CD4-positive, alpha-beta memory T cell (primary cell): ENCODE measurements at regions of chr12 and their contacts with region 1.

Region 1: GRCh38 chr12:131642101-131642540 is 68.8 kb upstream of the SFSWAP start:
- DNase-seq: no peak
- H3K4me3 ChIP-seq: no peak overlapping the region
- H3K4me3 Mint-ChIP-seq: no peak overlapping the region
- H3K27ac ChIP-seq: no peak overlapping the region
- H3K27ac Mint-ChIP-seq: no peak overlapping the region
- H3K4me1 ChIP-seq: no peaks in the 10 kb centered on the region
- H3K4me1 Mint-ChIP-seq: peaks cover 0 to 4% (median 1%) of the 10 kb centered on the region in 4 donors
- H3K27me3 ChIP-seq: no peaks in the 10 kb centered on the region
- H3K27me3 Mint-ChIP-seq: peaks cover 0 to 5% of the 10 kb centered on the region in 2 donors

Region 2: DNA sequence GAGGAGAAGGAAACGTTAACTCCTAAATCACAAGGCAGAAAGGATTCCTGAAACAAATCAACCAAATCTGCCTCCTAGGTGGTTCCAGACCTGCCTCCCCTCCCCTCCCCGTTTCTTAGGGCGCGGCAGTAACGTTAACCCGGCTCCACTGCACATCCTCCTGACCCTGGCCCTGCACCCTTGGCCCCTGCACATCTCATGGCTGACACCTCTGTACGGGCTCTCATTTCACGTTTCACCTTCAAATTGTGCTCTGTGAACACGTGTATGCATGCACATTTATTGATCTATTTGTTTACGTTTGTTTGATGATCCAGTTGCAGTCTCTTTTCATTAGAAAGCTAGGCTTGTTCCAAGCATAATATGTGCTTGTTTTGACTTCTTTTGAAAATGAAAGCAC is 330.4 kb before region 1 on chr12:
- CTCF ChIA-PET with region 1: no interaction called
- POLR2A ChIA-PET with region 1: no interaction called
- intact Hi-C with region 1: loop called (anchors 5 kb)
- DNase-seq: no peak
- H3K4me3 ChIP-seq: no peak overlapping the region
- H3K4me3 Mint-ChIP-seq: peak overlapping the region in 2 of 8 donors; percentile 55 to 63
- H3K27ac ChIP-seq: no peak overlapping the region
- H3K27ac Mint-ChIP-seq: no peak overlapping the region
- H3K4me1 ChIP-seq: no peaks in the 10 kb centered on the region
- H3K4me1 Mint-ChIP-seq: peaks cover 0 to 17% (median 6%) of the 10 kb centered on the region in 4 donors
- H3K27me3 ChIP-seq: no peaks in the 10 kb centered on the region
- H3K27me3 Mint-ChIP-seq: peaks cover 9 to 19% of the 10 kb centered on the region in 2 donors

Region 3: GRCh38 chr12:131671276-131671675 is 29.2 kb after region 1 on chr12:
- CTCF ChIA-PET with region 1: no interaction called
- POLR2A ChIA-PET with region 1: no interaction called
- intact Hi-C with region 1: no loop called
- DNase-seq: no peak
- H3K4me3 ChIP-seq: no peak overlapping the region
- H3K4me3 Mint-ChIP-seq: no peak overlapping the region
- H3K27ac ChIP-seq: no peak overlapping the region
- H3K27ac Mint-ChIP-seq: no peak overlapping the region
- H3K4me1 ChIP-seq: no peaks in the 10 kb centered on the region
- H3K4me1 Mint-ChIP-seq: peaks cover 0 to 4% (median 1%) of the 10 kb centered on the region in 4 donors
- H3K27me3 ChIP-seq: no peaks in the 10 kb centered on the region
- H3K27me3 Mint-ChIP-seq: peaks cover 1 to 5% of the 10 kb centered on the region in 2 donors